ENCODE measurements at regions of chr10 and their contacts with region 1.

Region 1: GRCh38 chr10:17872191-17873091 is 63.3 kb downstream of the MRC1 start:
- DNase-seq: no peak
- ATAC-seq: peak; percentile 51 to 74 (median 58)
- H3K4me3 ChIP-seq: no peak overlapping the region
- H3K27ac ChIP-seq: no peak overlapping the region
- H3K4me1 ChIP-seq: no peaks in the 10 kb centered on the region
- H3K27me3 ChIP-seq: no peaks in the 10 kb centered on the region
- CTCF ChIP-seq: peak; percentile 57

Region 2: DNA sequence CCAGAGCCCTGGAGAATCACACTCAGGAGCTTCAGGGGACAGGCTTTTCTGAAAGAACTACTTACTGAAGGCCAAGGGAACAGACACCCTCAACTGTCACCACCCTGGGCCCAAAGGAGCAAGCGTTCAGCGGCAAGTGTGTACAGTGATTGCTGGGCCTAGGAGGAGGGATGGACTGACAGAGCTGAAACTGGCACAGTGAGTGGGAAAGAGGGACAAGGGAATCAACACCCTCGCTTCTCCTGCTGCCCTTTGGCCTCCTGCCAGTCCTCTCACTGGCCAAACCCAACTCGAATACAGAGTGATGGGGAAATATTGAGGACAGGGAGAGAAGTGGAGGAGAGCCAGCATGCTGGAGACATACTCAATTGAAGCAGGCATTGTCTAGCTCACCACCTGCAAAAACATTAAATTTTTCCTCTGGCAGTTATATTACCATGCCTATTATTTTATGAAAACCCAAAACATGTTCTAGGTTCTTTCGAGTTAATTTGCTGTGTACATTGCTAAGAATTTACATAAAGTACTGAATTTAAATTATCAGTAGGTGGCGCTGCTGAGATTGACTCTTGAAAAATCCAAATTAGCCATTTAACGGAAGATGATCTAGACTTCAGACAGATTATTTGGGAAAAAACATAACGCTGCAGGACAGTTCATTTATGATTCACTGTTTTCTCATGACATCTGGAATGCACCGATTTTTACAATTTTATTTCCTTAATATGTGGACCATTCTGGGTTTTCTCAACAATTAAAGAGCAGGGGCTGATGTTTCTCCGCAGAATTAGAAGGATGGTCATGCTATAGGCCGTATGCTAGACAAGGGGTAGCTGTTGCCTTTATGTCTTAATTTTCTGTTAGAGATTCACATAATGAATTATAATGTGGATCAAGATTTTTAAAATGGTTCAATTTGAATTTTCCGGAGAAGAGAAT is 135.1 kb before region 1 on chr10:
- intact Hi-C with region 1: loop called in 1 of 2 experiments (anchors 5 kb)
- DNase-seq: peak; percentile 37 to 67
- ATAC-seq: peak; percentile 21 to 42 (median 30)
- H3K4me3 ChIP-seq: no peak overlapping the region
- H3K27ac ChIP-seq: no peak overlapping the region
- H3K4me1 ChIP-seq: peaks cover 29% of the 10 kb centered on the region
- H3K27me3 ChIP-seq: no peaks in the 10 kb centered on the region
- CTCF ChIP-seq: peak; percentile 62

Region 3: DNA sequence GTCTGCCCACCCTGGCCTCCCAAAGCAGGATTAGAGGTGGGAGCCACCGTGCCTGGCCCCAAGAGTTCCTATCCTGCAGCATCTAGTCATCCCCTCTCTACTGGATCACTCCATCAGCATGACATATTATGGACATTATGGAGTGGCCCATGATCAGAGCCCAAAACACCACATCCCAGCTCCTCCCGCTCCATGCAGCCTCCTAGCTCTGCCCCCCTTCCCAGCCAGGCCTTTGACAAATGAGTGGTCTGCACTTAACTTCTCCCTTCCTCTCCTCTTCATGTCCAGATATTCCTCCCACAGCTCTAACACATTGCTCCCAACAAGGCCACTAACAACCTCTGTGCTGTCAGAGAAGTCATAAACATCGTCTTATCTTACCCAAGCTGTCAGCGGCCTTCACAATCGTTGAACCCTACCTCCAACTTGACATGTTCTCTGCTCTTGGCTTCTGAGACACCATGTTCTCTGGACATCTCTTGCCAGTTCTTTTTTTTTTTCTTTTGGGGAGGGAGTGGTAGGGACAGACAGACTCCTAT is 591.3 kb after region 1 on chr10:
- intact Hi-C with region 1: no loop called
- DNase-seq: no peak
- ATAC-seq: no peak
- H3K4me3 ChIP-seq: no peak overlapping the region
- H3K27ac ChIP-seq: no peak overlapping the region
- H3K4me1 ChIP-seq: no peaks in the 10 kb centered on the region
- H3K27me3 ChIP-seq: no peaks in the 10 kb centered on the region
- CTCF ChIP-seq: no peak

Measured in psoas muscle (tissue), 8 donors.